Activated naive CD8-positive, alpha-beta T cell treated with anti-CD3 and anti-CD28 coated beads, Interleukin-2, amount 10 ng/mL, durations not matched to agents 7 days and 5 days (primary cell): ENCODE measurements at regions of chr6 and their contacts with region 1.

Region 1: GRCh38 chr6:159042003-159042825 is 2.6 kb downstream of the TAGAP start:
- DNase-seq: peak; percentile 63
- ATAC-seq: peak; percentile 38
- H3K4me3 Mint-ChIP-seq: peak overlapping the region; percentile 97
- H3K27ac Mint-ChIP-seq: peak overlapping the region; percentile 96
- H3K4me1 Mint-ChIP-seq: peaks cover 56% of the 10 kb centered on the region
- H3K27me3 Mint-ChIP-seq: no peaks in the 10 kb centered on the region

Region 2: GRCh38 chr6:159062564-159062945 is 20.3 kb after region 1 on chr6:
- POLR2A ChIA-PET with region 1: interaction called, 312 read pairs
- DNase-seq: no peak
- ATAC-seq: peak; percentile 92
- H3K4me3 Mint-ChIP-seq: peak overlapping the region; percentile 75
- H3K27ac Mint-ChIP-seq: peak overlapping the region; percentile 96
- H3K4me1 Mint-ChIP-seq: peaks cover 69% of the 10 kb centered on the region
- H3K27me3 Mint-ChIP-seq: no peaks in the 10 kb centered on the region

Region 3: GRCh38 chr6:159074120-159074684 is 32.0 kb after region 1 on chr6:
- POLR2A ChIA-PET with region 1: interaction called, 14 read pairs
- DNase-seq: no peak
- ATAC-seq: no peak
- H3K4me3 Mint-ChIP-seq: no peak overlapping the region
- H3K27ac Mint-ChIP-seq: no peak overlapping the region
- H3K4me1 Mint-ChIP-seq: peaks cover 44% of the 10 kb centered on the region
- H3K27me3 Mint-ChIP-seq: peaks cover 2% of the 10 kb centered on the region

Region 4: GRCh38 chr6:159080217-159080976 is 38.2 kb after region 1 on chr6:
- POLR2A ChIA-PET with region 1: interaction called, 17 read pairs
- DNase-seq: no peak
- ATAC-seq: peak; percentile 59
- H3K4me3 Mint-ChIP-seq: peak overlapping the region; percentile 33
- H3K27ac Mint-ChIP-seq: peak overlapping the region; percentile 80
- H3K4me1 Mint-ChIP-seq: peaks cover 42% of the 10 kb centered on the region
- H3K27me3 Mint-ChIP-seq: no peaks in the 10 kb centered on the region

Region 5: DNA sequence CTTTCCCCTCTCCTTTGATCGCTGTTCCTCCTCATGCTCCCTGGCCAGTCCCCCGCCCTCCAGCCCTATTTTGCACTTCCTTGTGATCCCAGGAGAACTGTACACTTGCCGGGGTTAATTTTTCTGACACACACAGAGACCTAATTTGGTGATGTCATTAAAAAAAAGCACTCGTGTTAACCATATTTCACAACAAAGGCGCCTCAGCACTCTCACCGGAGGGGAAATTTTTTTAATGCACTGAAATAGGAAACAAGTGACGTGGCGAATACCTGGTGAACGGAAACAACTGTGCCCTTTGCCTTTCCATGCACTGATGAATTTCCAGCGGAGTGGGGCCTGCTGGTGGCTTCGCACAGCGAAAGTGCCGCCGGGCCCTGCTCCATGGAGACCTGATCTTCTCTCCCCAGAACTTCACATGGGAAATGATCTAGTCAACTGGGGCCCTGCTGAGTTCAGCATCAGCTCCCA is 56.5 kb after region 1 on chr6:
- POLR2A ChIA-PET with region 1: interaction called, 245 read pairs
- DNase-seq: peak; percentile 58
- ATAC-seq: peak; percentile 60
- H3K4me3 Mint-ChIP-seq: peak overlapping the region; percentile 88
- H3K27ac Mint-ChIP-seq: peak overlapping the region; percentile 100
- H3K4me1 Mint-ChIP-seq: peaks cover 56% of the 10 kb centered on the region
- H3K27me3 Mint-ChIP-seq: no peaks in the 10 kb centered on the region

Region 6: DNA sequence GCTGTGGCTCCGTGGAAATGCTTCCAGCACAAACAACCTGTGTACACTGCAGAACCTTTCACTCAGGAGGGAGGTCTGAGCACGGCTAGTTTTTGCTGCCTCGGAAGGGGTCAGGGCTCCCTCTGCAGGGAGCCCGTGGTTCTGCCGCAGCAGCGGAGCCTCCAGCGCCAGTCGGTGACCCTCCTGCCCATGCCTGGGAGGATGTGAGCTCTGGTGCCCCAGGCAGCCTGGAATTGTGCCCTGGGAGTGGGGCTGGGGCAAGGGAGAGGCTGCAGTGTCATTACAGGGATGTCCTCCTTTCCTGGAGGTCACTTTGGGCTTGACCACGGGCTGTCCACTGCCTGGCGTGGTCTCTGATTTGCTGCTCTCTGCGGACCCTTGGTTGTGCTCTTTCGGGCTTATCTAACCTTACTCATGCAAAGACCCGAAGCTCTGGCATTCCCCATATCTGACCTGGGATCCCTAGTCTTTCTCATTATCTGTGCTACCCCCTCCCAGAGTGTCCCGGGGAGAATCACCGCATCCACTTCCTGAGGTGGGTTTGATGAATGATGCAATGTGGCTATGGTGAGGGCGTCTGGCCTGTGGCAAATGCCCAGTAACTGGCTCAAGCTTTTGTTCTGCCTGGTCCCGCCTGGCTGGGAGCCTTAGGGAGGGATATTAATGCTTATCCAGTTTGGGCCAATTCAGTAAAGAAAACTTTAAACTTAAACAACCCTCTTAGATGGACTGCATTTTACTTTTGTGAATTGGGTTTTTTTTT is 62.1 kb after region 1 on chr6:
- POLR2A ChIA-PET with region 1: interaction called, 245 read pairs
- DNase-seq: peak; percentile 85
- ATAC-seq: peak; percentile 61
- H3K4me3 Mint-ChIP-seq: peak overlapping the region; percentile 70
- H3K27ac Mint-ChIP-seq: peak overlapping the region; percentile 91
- H3K4me1 Mint-ChIP-seq: peaks cover 57% of the 10 kb centered on the region
- H3K27me3 Mint-ChIP-seq: no peaks in the 10 kb centered on the region

Region 7: DNA sequence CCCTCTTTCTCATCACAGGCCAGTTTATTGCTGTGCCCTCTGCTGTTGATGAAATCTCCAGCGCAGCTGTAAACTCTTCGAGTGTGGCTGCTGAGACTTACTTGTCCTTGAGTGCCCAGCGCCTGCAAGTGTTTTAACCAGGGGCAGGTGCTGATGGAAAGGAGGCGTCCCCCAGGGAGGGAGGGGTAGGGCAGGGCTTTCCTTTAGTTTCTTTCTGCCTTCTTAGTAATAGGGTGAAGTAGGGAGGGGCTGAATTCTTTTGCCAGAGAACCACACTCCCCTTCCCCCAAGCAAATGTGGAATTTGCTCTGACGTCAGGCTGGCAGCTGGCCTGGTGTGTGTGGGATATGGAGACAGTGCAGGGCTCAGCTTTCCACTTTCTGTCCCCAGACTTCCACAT is 987.9 kb after region 1 on chr6:
- POLR2A ChIA-PET with region 1: no interaction called
- DNase-seq: no peak
- ATAC-seq: no peak
- H3K4me3 Mint-ChIP-seq: no peak overlapping the region
- H3K27ac Mint-ChIP-seq: no peak overlapping the region
- H3K4me1 Mint-ChIP-seq: peaks cover 13% of the 10 kb centered on the region
- H3K27me3 Mint-ChIP-seq: no peaks in the 10 kb centered on the region